Activated CD8-positive, alpha-beta T cell treated with anti-CD3 and anti-CD28 coated beads for 36 hours (primary cell): ENCODE measurements at regions of chr5 and their contacts with region 1.

Region 1: DNA sequence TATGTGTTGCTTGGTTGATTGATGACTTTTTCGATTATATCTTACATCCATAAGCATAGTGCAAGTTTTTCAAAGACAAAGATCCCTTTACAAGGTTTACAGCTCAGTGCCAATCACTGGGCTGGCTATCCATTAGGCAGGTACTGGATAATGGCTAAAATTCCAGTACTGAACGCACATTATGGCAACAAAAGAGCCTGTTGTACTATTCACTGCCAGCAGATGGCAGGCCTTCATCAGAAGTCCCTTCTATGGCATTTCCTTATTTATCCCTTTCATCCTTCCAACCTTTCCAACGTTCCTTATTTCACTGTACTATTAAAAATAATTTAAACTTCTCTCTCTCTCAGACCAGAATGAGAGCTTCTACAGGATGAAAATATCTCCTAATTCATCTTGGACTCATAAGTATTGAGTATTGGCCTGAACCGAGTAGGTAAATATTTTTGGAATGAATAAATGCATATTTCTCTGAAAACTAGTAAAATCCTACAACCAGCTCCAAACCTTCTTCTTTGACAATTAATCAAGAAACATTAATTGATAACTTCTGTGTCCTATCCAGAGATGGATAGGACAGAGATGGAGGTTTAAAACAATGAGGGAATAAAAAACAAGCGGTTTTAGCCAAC is 6.7 kb upstream of the WNT8A start:
- DNase-seq: peak; percentile 74
- ATAC-seq: peak; percentile 31
- H3K4me3 Mint-ChIP-seq: no peak overlapping the region
- H3K27ac Mint-ChIP-seq: no peak overlapping the region
- H3K4me1 Mint-ChIP-seq: peaks cover 14% of the 10 kb centered on the region
- H3K27me3 Mint-ChIP-seq: no peaks in the 10 kb centered on the region
- CTCF ChIP-seq: peak; percentile 98

Region 2: DNA sequence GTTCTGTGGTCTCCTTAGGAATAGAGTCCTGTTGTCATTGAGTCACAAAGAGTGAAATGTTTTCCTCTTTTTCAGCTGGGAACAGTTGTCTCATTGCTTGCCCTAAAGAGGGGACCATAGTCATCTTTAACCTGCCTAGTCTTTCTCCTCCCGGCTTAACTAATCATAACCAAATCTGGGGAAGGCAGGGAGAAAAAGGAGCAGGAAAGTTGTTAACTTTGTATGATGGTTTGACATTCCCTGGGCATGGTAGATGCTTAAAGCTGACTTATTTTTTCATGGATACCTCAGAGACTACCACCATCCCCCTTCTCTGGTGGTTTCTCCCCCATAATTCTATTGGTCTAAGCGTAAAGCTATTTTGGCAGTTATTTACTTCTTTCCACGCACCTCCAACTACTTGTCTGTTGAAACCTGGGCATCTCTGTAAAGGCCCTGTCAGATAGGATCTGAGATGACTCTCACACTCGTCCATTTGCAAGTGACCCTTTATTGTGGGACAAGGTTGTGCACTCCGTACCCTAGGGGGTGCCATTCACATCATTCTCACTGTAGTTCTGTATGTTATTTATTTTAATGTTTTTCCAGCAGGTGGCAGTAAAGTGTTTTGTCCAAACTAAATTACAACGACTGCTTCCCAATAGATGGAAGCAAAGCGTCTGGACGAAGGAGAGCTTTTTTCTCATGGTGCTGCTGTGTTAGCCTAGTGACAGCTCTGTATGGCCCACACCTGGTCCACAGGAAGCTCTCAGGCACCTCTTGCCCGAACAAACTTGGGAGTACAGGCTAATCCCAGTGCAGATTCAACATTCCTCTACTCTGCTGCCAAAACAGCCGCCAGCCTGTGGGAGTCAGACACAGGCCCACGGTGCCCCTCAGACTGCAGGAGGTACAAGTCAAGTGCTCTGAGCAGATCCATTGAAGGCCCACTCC is 41.3 kb before region 1 on chr5:
- CTCF ChIA-PET with region 1: interaction called, 87 read pairs
- POLR2A ChIA-PET with region 1: no interaction called
- intact Hi-C with region 1: no loop called
- DNase-seq: peak; percentile 81
- ATAC-seq: peak; percentile 67
- H3K4me3 Mint-ChIP-seq: no peak overlapping the region
- H3K27ac Mint-ChIP-seq: peak overlapping the region; percentile 6
- H3K4me1 Mint-ChIP-seq: peaks cover 27% of the 10 kb centered on the region
- H3K27me3 Mint-ChIP-seq: no peaks in the 10 kb centered on the region
- CTCF ChIP-seq: peak; percentile 88

Region 3: GRCh38 chr5:138095100-138095907 is 18.1 kb after region 1 on chr5:
- CTCF ChIA-PET with region 1: interaction called, 71 read pairs
- POLR2A ChIA-PET with region 1: no interaction called
- intact Hi-C with region 1: no loop called
- DNase-seq: no peak
- ATAC-seq: no peak
- H3K4me3 Mint-ChIP-seq: no peak overlapping the region
- H3K27ac Mint-ChIP-seq: no peak overlapping the region
- H3K4me1 Mint-ChIP-seq: peaks cover 25% of the 10 kb centered on the region
- H3K27me3 Mint-ChIP-seq: peaks cover 6% of the 10 kb centered on the region
- CTCF ChIP-seq: no peak

Region 4: GRCh38 chr5:138102454-138103318 is 25.5 kb after region 1 on chr5:
- CTCF ChIA-PET with region 1: interaction called, 12 read pairs
- POLR2A ChIA-PET with region 1: no interaction called
- intact Hi-C with region 1: no loop called
- DNase-seq: no peak
- ATAC-seq: no peak
- H3K4me3 Mint-ChIP-seq: no peak overlapping the region
- H3K27ac Mint-ChIP-seq: no peak overlapping the region
- H3K4me1 Mint-ChIP-seq: no peaks in the 10 kb centered on the region
- H3K27me3 Mint-ChIP-seq: peaks cover 10% of the 10 kb centered on the region
- CTCF ChIP-seq: no peak

Region 5: DNA sequence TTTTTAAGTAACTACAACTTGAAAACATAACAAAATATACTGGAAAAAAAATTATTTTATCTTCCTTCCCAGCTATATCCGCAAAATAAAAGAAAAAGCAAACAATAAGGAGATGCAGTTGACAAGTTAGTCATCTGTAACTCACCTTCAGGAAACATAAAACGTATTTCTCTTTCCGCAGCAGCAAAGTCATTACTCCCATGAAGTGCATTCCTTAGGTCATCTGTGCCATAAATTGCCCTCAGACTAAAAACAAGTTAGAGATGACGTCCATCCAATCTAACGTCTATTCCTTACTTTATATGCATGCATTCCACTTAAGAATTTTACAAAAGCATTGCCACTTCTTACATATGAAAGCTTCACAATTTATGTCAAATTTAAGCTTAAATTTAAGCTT is 51.2 kb after region 1 on chr5:
- CTCF ChIA-PET with region 1: interaction called, 159 read pairs
- POLR2A ChIA-PET with region 1: interaction called, 3 read pairs
- intact Hi-C with region 1: loop called (anchors 1 kb)
- DNase-seq: no peak
- ATAC-seq: no peak
- H3K4me3 Mint-ChIP-seq: no peak overlapping the region
- H3K27ac Mint-ChIP-seq: no peak overlapping the region
- H3K4me1 Mint-ChIP-seq: no peaks in the 10 kb centered on the region
- H3K27me3 Mint-ChIP-seq: peaks cover 2% of the 10 kb centered on the region
- CTCF ChIP-seq: no peak

Region 6: GRCh38 chr5:138138949-138139780 is 62.0 kb after region 1 on chr5 and contains the start of gene NME5:
- CTCF ChIA-PET with region 1: interaction called, 159 read pairs
- POLR2A ChIA-PET with region 1: interaction called, 3 read pairs
- intact Hi-C with region 1: no loop called
- DNase-seq: peak; percentile 28
- ATAC-seq: no peak
- H3K4me3 Mint-ChIP-seq: no peak within 1 kb of the TSS
- H3K27ac Mint-ChIP-seq: no peak within 1 kb of the TSS
- H3K4me1 Mint-ChIP-seq: peaks cover 4% of the 10 kb centered on the region
- H3K27me3 Mint-ChIP-seq: peaks cover 13% of the 10 kb centered on the region
- CTCF ChIP-seq: no peak
- total RNA-seq, gene NME5: not detected

Region 7: DNA sequence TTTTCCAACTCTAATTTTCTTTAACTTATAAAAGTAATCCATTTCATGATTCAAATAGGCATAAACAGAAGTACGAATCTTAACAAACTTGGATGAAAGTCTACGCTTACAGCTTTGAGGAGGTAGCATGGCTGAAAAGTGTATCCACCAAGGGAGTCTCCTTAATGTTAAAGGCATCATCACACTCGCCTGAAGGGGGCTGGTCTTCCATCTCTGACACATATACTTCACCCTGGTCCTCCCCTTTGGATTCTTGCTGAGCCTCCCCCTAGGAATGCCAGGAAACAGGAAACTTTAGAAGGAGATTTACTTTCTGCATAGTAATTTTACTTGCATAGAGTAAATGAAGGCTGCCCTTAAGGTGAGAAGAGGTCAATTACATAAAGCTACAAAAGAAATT is 72.3 kb after region 1 on chr5:
- CTCF ChIA-PET with region 1: interaction called, 10 read pairs
- POLR2A ChIA-PET with region 1: no interaction called
- intact Hi-C with region 1: no loop called
- DNase-seq: no peak
- ATAC-seq: no peak
- H3K4me3 Mint-ChIP-seq: no peak overlapping the region
- H3K27ac Mint-ChIP-seq: no peak overlapping the region
- H3K4me1 Mint-ChIP-seq: no peaks in the 10 kb centered on the region
- H3K27me3 Mint-ChIP-seq: no peaks in the 10 kb centered on the region
- CTCF ChIP-seq: no peak